ENCODE measurements at regions of chr6 and their contacts with region 1.

Region 1: GRCh38 chr6:188821-189655 is 103.2 kb upstream of the DUSP22 start:
- DNase-seq: peak; percentile 97
- H3K4me3 Mint-ChIP-seq: no peak overlapping the region
- H3K27ac Mint-ChIP-seq: peak overlapping the region; percentile 69
- H3K4me1 Mint-ChIP-seq: peaks cover 18% of the 10 kb centered on the region
- H3K27me3 Mint-ChIP-seq: no peaks in the 10 kb centered on the region
- CTCF ChIP-seq: peak; percentile 92

Region 2: GRCh38 chr6:217048-217659 is 28.1 kb after region 1 on chr6:
- CTCF ChIA-PET with region 1: interaction called, 4 read pairs
- POLR2A ChIA-PET with region 1: interaction called, 4 read pairs
- intact Hi-C with region 1: loop called (anchors 5 kb)
- DNase-seq: peak; percentile 28
- H3K4me3 Mint-ChIP-seq: no peak overlapping the region
- H3K27ac Mint-ChIP-seq: no peak overlapping the region
- H3K4me1 Mint-ChIP-seq: peaks cover 36% of the 10 kb centered on the region
- H3K27me3 Mint-ChIP-seq: no peaks in the 10 kb centered on the region
- CTCF ChIP-seq: peak; percentile 46

Region 3: GRCh38 chr6:313087-313486 is 124.0 kb after region 1 on chr6:
- CTCF ChIA-PET with region 1: interaction called, 10 read pairs
- POLR2A ChIA-PET with region 1: interaction called, 3 read pairs
- intact Hi-C with region 1: no loop called
- DNase-seq: no peak
- H3K4me3 Mint-ChIP-seq: no peak overlapping the region
- H3K27ac Mint-ChIP-seq: no peak overlapping the region
- H3K4me1 Mint-ChIP-seq: peaks cover 2% of the 10 kb centered on the region
- H3K27me3 Mint-ChIP-seq: no peaks in the 10 kb centered on the region
- CTCF ChIP-seq: no peak

Region 4: DNA sequence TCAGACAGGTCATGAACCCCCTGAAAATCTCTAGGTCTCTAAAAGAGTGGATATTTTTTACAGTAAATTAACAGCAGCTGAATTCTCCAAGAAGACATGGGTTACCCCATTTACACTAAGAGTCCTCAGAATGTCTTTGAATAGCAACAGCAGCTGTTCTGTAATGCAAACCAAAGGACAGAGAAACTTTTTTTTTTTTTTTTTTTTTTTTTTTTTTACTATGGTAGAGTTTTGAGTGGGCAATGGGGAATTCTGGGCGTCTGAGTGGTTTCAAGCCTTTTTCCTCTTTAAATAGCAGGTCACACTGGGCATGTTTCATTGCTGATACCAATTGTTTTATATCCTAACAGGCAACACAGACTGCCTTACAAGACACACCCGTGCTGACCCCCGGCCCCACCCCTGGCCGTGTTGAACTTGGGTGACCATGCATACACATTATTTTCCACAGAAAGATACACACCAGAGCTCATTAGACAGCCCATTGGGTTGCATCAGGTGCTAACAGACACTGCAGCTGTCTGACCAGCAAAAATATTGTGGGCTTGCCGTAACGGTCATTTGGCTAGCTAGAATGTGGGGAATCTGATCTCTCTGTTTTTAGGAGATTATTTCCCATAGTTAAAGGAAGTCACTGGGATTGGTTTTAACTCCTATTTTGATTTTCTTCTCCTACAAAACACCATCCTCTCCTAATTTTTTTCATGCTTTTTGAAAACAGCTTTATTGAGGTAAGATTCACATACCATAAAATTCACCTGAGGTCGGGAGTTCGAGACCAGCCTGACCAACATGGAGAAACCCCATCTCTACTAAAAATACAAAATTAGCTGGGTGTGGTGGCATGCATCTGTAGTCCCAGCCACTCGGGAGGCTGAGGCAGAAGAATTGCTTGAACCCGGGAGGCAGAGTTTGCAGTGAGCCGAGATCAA is 175.8 kb after region 1 on chr6:
- CTCF ChIA-PET with region 1: no interaction called
- POLR2A ChIA-PET with region 1: no interaction called
- intact Hi-C with region 1: loop called (anchors 5 kb)
- DNase-seq: no peak
- H3K4me3 Mint-ChIP-seq: no peak overlapping the region
- H3K27ac Mint-ChIP-seq: no peak overlapping the region
- H3K4me1 Mint-ChIP-seq: no peaks in the 10 kb centered on the region
- H3K27me3 Mint-ChIP-seq: peaks cover 31% of the 10 kb centered on the region
- CTCF ChIP-seq: no peak

Region 5: GRCh38 chr6:408599-409102 is 219.6 kb after region 1 on chr6:
- CTCF ChIA-PET with region 1: interaction called, 8 read pairs
- POLR2A ChIA-PET with region 1: no interaction called
- intact Hi-C with region 1: loop called (anchors 1 kb)
- DNase-seq: peak; percentile 49
- H3K4me3 Mint-ChIP-seq: no peak overlapping the region
- H3K27ac Mint-ChIP-seq: no peak overlapping the region
- H3K4me1 Mint-ChIP-seq: no peaks in the 10 kb centered on the region
- H3K27me3 Mint-ChIP-seq: peaks cover 19% of the 10 kb centered on the region
- CTCF ChIP-seq: peak; percentile 29

Region 6: DNA sequence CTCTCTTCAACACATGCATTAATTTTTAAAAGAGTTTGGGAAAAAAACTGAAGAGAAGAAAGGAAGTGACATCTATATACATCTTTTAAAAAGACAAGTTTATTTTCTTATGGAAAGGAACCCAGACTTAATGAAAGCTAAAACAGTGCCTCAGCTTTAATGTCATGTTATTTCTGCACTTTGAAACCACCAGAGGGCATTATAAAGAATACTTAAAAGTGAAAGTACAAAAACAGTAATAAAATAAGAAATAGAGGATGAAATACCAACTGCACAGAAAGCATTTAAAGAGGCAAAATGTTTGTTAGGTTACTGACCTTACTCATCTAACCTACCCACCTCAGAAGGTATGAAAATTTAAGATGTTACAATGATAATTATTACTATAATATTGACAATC is 369.1 kb after region 1 on chr6:
- CTCF ChIA-PET with region 1: interaction called, 9 read pairs
- POLR2A ChIA-PET with region 1: no interaction called
- intact Hi-C with region 1: loop called (anchors 5 kb)
- DNase-seq: no peak
- H3K4me3 Mint-ChIP-seq: no peak overlapping the region
- H3K27ac Mint-ChIP-seq: no peak overlapping the region
- H3K4me1 Mint-ChIP-seq: no peaks in the 10 kb centered on the region
- H3K27me3 Mint-ChIP-seq: no peaks in the 10 kb centered on the region
- CTCF ChIP-seq: no peak

Measured in MCF 10A (cell line).